ENCODE measurements at regions of chr1 and their contacts with region 1.

Region 1: DNA sequence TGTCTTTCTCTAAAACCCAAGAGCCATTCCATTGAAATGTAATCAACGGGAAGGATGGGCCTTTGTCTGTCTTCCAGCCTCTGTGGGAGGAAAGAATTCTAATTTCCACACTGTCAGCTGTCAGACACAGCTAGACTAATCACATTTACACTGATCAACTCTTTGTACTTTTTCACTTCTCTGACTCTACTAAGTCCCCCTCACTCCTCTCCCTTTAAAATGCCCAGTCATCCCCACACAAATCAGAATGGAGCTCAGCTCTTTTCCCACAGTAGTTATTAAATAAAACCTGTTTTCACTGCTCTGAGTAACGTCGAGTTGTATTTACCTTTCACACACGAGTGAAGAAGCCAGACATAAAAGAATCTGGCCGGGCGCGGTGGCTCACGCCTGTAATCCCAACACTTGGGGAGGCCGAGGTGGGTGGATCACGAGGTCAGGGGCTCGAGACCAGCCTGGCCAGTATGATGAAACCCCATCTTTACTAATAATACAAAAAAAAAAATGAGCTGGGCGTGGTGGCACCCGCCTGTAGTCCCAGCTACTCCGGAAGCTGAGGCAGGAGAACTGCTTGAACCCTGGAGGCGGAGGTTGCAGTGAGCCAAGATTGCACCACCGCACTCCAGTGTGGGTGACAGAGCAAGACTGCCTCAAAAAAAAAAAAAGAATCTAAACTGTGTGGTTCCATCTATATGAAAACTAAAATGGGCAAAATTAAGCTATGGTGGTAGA is 13.3 kb downstream of the ZBTB8OS start:
- DNase-seq: peak; percentile 5 to 72
- H3K4me3 ChIP-seq: no peak overlapping the region
- H3K27ac ChIP-seq: peak overlapping the region; percentile 78
- H3K4me1 ChIP-seq: peaks cover 22% of the 10 kb centered on the region
- H3K27me3 ChIP-seq: no peaks in the 10 kb centered on the region
- CTCF ChIP-seq: no peak

Region 2: DNA sequence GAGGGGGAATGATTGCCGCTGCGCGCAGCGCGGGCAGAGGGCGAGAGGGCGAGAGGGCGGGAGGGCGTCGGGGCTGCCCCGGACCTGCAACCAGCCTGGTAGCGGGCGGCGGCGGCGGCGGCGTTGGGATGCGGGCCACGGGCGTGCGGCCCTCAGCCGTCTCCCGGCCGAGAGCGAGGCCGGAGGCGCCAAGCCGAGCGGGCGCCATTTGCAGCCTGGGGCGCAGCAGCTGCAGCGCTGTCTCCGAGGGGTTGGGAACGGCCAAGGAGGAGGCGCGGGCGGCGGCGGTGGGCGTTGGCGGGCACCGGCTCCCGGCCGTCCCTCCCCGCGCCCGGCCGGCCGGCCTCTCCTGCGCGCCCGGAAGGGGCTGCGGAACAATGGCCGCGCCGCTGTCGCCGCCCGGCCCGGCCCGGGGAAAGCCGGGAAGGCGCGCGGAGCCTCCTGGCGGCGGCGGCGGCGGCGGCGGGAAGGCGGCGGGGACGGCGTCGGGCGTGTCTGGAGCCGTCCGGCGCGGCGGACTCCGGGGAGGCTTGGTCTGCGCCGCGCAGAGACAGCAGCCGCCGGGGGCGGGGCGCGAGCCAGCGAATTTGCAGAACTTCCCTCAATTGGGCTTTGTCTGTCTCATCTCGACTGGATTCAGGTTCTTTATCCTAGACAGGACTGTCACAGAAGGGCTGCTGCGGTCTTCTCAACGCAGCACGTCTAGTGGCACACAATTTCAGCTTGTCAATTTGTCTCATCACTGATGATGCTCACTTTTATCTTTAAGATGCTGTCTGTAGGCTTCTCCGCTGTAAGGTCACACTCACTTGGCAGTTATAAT is 136.5 kb before region 1 on chr1:
- CTCF ChIA-PET with region 1: no interaction called
- POLR2A ChIA-PET with region 1: no interaction called
- intact Hi-C with region 1: no loop called
- DNase-seq: peak in 1 of 2 experiments; percentile 57
- H3K4me3 ChIP-seq: peak overlapping the region; percentile 75
- H3K27ac ChIP-seq: no peak overlapping the region
- H3K4me1 ChIP-seq: no peaks in the 10 kb centered on the region
- H3K27me3 ChIP-seq: no peaks in the 10 kb centered on the region
- CTCF ChIP-seq: no peak

Region 3: GRCh38 chr1:32538887-32539583 is 98.0 kb before region 1 on chr1 and contains the start of gene ZBTB8A:
- CTCF ChIA-PET with region 1: interaction called, 10 read pairs
- POLR2A ChIA-PET with region 1: no interaction called
- intact Hi-C with region 1: no loop called
- DNase-seq: peak; percentile 48 to 56
- H3K4me3 ChIP-seq: peak within 1 kb of the TSS; percentile 68
- H3K27ac ChIP-seq: no peak within 1 kb of the TSS
- H3K4me1 ChIP-seq: peaks cover 10% of the 10 kb centered on the region; the same call in 1 of the 2 replicates
- H3K27me3 ChIP-seq: no peaks in the 10 kb centered on the region
- CTCF ChIP-seq: no peak
- total RNA-seq, gene ZBTB8A: 4.2 and 4.3 TPM in 2 replicates

Region 4: DNA sequence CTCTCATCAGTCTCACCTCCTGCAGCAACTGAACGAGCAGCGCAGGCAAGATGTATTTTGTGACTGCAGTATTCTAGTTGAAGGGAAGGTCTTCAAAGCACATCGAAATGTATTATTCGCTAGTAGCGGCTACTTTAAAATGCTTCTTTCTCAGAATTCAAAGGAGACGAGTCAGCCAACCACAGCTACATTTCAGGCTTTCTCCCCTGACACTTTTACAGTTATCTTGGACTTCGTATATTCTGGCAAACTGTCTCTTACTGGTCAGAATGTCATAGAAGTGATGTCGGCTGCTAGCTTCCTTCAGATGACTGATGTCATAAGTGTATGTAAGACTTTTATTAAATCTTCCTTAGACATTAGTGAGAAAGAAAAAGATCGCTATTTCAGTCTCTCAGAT is 44.1 kb before region 1 on chr1:
- CTCF ChIA-PET with region 1: no interaction called
- POLR2A ChIA-PET with region 1: no interaction called
- intact Hi-C with region 1: no loop called
- DNase-seq: no peak
- H3K4me3 ChIP-seq: no peak overlapping the region
- H3K27ac ChIP-seq: no peak overlapping the region
- H3K4me1 ChIP-seq: peaks cover 5% of the 10 kb centered on the region; the same call in 1 of the 2 replicates
- H3K27me3 ChIP-seq: no peaks in the 10 kb centered on the region
- CTCF ChIP-seq: no peak

Region 5: GRCh38 chr1:32742977-32743376 is 105.9 kb after region 1 on chr1:
- CTCF ChIA-PET with region 1: no interaction called
- POLR2A ChIA-PET with region 1: no interaction called
- intact Hi-C with region 1: no loop called
- DNase-seq: peak; percentile 62 to 70
- H3K4me3 ChIP-seq: peak overlapping the region; percentile 69
- H3K27ac ChIP-seq: peak overlapping the region; percentile 84
- H3K4me1 ChIP-seq: peaks cover 33% of the 10 kb centered on the region
- H3K27me3 ChIP-seq: no peaks in the 10 kb centered on the region
- CTCF ChIP-seq: no peak